Caco-2 (cell line): ENCODE measurements at regions of chr12 and their contacts with region 1.

Region 1: GRCh38 chr12:33876618-33877017 is 145.7 kb upstream of the ALG10 start:
- DNase-seq: no peak
- H3K4me3 ChIP-seq: no peak overlapping the region
- H3K4me3 Mint-ChIP-seq: no peak overlapping the region
- H3K27ac Mint-ChIP-seq: no peak overlapping the region
- H3K4me1 ChIP-seq: no peaks in the 10 kb centered on the region
- H3K4me1 Mint-ChIP-seq: no peaks in the 10 kb centered on the region
- H3K27me3 ChIP-seq: no peaks in the 10 kb centered on the region
- H3K27me3 Mint-ChIP-seq: no peaks in the 10 kb centered on the region
- CTCF ChIP-seq: peak; percentile 26 to 34

Region 2: DNA sequence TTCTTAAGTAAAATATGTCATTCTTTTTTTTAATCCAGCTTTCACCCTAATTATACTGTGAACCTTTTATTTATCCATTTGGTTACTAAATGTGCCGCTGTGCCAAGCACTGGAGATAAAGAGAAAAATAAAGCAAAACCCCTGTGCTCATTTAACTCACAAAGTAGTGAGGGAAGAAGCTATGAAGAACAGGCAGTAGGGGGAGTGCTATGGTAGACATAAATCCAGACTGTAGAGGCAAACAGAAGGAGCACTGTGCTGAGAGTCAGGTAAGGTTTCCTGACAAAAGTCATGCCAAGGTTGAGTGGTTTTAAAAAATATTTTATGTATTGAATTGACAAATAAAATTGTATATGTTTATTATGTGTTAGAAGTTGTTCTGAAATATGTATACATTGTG is 248.5 kb before region 1 on chr12:
- CTCF ChIA-PET with region 1: no interaction called
- POLR2A ChIA-PET with region 1: no interaction called
- intact Hi-C with region 1: loop called (anchors 10 kb)
- DNase-seq: peak in 1 of 2 experiments; percentile 13
- H3K4me3 ChIP-seq: no peak overlapping the region
- H3K4me3 Mint-ChIP-seq: no peak overlapping the region
- H3K27ac Mint-ChIP-seq: no peak overlapping the region
- H3K4me1 ChIP-seq: no peaks in the 10 kb centered on the region
- H3K4me1 Mint-ChIP-seq: no peaks in the 10 kb centered on the region
- H3K27me3 ChIP-seq: no peaks in the 10 kb centered on the region
- H3K27me3 Mint-ChIP-seq: peaks cover 11% of the 10 kb centered on the region
- CTCF ChIP-seq: peak in 1 of 2 experiments; percentile 31